Activated T-helper 1 cell treated with anti-CD3 and anti-CD28 coated beads, Interleukin-12 subunit alpha, Interleukin-12 subunit beta, Interleukin-2, Interleukin-4 antibody, amounts not matched to agents 30 ng/mL and 10 ng/mL and 1 ng/mL, durations not matched to agents 14 hours and 24 hours and 36 hours (primary cell): ENCODE measurements at regions of chr12 and their contacts with region 1.

Region 1: DNA sequence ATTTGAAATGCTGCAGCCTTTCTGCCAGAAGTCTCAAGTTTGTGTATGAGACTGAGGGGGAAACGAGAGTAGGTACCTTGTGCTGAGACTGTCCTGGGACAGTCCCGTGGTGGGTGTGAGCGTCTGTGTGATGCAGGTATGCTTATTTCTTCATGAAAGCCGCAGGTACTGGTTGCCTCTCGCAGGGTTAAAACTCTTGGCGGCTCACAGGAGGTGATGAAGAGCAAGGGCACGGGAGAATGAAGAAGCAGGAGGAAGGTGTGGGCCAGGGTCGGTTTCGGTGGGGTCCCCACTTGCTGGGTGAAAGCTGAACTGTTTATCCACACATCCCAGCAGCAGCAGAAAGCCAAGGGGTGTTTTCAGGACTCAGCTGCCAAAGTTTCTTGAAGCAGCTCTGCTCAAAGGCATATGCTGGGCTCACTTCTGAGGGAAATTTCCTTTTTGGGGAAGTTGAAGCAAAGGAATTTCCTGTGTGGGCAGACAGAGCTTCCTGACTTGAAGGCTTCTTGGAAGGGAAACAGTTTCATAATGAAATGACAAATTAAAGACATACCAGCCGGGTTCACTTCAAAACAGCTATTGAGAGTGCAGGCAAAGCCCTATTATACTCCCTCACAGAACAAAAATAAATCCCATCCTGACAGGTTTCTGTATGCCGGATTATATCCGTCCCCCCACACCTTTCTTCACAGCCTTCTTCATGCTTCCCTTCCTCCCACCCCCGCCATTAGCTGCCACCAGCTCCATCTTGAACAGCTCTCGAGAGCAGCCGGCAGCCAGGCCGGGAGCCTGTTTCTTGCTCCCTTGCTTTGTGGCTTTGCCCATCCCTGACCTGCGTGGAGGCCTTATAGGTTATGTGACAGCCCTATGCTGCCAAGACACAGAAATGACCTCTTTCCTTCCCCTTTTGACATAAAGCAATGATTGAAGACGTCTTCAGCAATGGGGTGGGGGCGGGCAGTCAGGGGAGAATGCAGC is 116.6 kb downstream of the ETV6 start:
- DNase-seq: peak; percentile 19
- H3K4me3 Mint-ChIP-seq: peak overlapping the region; percentile 47
- H3K27ac Mint-ChIP-seq: peak overlapping the region; percentile 93
- H3K4me1 Mint-ChIP-seq: peaks cover 100% of the 10 kb centered on the region
- H3K27me3 Mint-ChIP-seq: no peaks in the 10 kb centered on the region

Region 2: DNA sequence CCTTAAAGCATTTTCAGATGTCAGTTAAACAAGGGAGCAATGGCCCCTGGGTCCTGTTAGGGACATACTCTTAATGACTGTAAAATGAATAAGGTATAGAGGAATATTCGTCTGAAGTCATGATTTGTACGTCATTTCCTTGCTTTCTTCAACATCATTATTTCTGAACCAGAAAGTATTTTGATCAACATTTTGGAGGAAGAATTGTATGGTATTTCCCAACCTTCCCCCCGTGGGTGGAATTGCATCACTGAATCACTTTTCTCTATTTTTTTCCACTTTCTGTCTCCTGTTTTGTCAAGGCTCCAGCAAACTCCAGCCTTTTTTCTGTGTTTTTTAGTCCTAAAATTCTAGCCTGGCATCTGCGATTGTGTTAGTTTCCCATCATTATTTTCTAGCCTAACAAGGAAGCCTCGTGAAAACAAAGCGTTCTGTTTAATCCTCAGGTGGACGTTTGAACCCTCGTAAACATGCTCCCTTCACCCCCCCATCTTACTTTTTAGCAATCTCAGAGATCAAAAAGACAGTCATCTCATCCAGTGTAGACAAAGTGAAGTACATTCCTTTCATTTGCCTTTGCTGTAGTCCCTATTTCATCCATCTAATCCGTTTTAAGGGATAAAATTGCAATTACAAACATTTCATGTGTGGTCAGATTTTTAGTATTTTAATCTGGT is 54.3 kb before region 1 on chr12:
- intact Hi-C with region 1: loop called (anchors 2 kb)
- DNase-seq: no peak
- H3K4me3 Mint-ChIP-seq: no peak overlapping the region
- H3K27ac Mint-ChIP-seq: peak overlapping the region; percentile 75
- H3K4me1 Mint-ChIP-seq: peaks cover 76% of the 10 kb centered on the region
- H3K27me3 Mint-ChIP-seq: no peaks in the 10 kb centered on the region

Region 3: DNA sequence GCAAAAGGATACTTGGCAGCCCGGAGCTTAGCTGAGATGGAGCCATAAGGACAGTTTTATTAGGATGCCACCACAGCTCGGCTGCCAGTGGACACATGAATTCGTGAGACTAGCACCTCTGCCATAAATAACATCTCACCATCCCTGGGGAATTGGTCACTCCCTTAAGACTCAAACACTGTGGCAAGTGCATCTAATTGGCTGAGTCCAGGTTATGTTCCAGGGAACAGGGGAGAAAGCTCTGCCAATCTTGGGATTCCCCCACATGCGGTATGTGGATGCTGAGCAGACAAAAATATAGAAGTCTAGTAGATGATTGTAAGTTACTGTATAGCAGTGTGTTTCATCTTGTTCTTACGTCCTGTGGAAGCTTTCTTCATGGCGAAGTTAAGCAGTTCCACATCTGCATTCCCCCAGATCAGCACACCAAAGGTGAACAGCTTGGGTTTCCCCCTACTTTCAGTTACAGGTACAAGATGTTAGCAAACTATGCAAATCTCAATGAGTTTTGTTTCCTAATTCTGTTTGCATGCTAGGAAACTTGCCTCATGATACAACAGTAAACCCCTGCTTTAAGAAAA is 14.5 kb after region 1 on chr12:
- intact Hi-C with region 1: loop called (anchors 1 kb)
- DNase-seq: no peak
- H3K4me3 Mint-ChIP-seq: no peak overlapping the region
- H3K27ac Mint-ChIP-seq: peak overlapping the region; percentile 90
- H3K4me1 Mint-ChIP-seq: peaks cover 85% of the 10 kb centered on the region
- H3K27me3 Mint-ChIP-seq: no peaks in the 10 kb centered on the region

Region 4: DNA sequence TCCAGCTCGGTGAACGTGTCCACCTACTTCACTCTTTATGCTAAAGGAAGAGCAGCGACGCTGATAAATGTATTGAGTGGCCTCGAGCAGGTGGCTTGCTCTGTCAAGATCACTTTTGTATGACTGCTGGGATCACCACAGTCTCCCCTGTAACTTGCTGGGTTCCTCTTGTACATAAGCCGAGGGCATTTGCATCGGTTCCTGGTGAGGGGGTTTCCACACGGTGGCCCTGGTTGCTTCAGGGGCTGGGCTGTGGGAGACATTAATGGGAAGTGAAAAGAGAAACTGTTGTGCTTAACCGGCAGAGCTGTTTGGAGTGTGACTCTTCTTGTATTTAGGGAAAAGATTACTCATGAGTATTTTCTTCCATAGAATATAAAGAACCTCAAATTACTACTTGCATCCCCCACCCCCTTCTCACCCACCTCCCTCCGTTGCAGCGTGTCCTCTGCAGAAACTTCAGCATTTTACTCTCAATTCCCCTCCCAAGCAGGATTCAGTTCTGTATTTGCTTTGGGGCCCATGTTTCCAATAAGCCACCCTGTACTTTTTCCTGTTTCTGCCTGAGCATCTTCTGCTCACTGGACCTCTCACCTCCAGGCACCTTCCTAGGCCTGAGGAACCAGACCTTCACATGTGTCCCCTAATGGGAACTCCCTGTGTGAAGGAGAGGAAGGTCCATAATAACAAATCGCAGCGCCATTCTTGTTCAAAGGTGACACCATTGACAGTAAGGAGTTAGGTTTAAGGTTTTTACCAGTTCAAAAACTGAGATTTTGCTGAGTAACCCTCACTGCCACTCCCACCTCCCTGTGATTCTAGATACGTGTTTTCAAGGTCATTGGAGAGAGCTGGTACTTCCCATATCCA is 70.4 kb after region 1 on chr12:
- intact Hi-C with region 1: loop called (anchors 1 kb)
- DNase-seq: peak; percentile 53
- H3K4me3 Mint-ChIP-seq: peak overlapping the region; percentile 67
- H3K27ac Mint-ChIP-seq: peak overlapping the region; percentile 94
- H3K4me1 Mint-ChIP-seq: peaks cover 91% of the 10 kb centered on the region
- H3K27me3 Mint-ChIP-seq: no peaks in the 10 kb centered on the region

Region 5: GRCh38 chr12:11981121-11981733 is 215.1 kb after region 1 on chr12:
- intact Hi-C with region 1: loop called (anchors 1 kb)
- DNase-seq: peak; percentile 73
- H3K4me3 Mint-ChIP-seq: peak overlapping the region; percentile 36
- H3K27ac Mint-ChIP-seq: peak overlapping the region; percentile 96
- H3K4me1 Mint-ChIP-seq: peaks cover 62% of the 10 kb centered on the region
- H3K27me3 Mint-ChIP-seq: no peaks in the 10 kb centered on the region